GM10248 (cell line): ENCODE measurements at regions of chr17 and their contacts with region 1.

Region 1: DNA sequence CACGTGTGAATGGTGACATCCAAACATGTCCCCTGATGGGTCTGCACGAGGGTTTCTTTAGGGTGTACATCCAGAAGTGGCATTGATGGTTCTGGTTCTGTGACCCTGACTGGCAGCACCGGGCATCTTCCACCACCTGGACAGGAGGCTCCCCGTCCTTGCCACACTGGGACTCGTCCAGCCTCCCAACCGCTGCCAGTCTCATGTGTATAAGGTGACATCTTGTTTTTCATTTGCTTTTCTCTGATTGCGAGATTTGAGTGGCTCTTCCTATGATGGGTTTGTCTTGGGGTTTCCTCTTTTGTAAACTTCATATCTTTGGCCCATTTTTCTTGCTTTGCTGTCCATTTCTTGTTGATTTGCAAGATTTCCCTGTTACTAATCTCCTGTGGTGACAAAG is 9.2 kb upstream of the LIMD2 start:
- DNase-seq: no peak
- CTCF ChIP-seq: no peak

Region 2: DNA sequence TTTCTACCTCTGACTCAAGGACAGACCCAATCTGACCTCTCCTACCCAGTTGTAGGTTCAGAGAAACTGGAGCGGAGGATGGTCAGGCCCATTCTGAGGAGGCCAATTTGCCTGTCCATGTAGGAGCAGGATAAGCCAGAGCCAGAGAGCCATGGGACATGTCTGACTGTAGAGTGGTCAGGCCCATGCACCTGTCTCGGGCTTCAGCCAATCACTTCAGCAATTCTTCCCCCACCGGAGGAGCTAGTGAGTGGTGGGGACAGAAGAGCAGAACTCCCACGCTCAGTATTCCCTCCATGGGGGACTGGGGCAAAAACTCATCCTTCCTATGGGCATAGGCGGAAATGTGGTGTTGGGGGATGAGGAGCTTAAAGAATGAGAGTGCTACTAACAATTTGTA is 144.5 kb before region 1 on chr17:
- CTCF ChIA-PET with region 1: no interaction called
- POLR2A ChIA-PET with region 1: no interaction called
- DNase-seq: no peak
- CTCF ChIP-seq: no peak

Region 3: DNA sequence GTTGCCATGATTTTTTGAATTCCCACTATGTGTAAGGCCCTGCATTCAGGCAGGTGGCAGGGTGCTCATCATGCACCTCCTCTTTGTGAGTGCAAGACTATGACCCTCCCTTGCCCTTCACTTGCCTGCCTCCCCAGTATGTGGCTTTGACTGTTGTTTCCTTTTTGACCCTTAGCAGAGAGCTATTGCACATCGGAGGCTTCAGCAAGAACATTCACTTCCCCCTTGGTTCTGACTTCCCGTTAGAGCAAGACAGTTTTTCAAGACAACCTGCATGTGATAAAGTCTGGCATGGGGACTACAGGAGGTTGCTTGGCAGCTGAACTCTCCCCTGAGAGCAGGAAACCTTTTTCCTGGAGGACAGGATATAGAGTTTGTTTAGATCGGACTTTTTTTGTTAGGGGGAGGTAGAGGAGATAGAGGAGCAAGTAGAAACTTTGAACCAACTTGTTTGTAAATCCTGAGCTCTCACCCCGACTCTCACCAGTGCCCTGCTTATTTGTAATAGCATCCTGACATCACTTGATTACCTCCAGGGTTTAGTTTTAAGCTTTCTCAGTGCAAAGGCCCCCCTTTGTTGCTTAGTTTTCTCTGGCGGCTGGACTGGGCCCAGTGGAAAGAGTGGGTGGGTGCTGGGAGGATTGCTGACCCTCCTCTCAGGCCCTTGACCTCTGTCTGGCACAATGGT is 43.4 kb before region 1 on chr17:
- CTCF ChIA-PET with region 1: no interaction called
- POLR2A ChIA-PET with region 1: no interaction called
- DNase-seq: peak; percentile 50
- CTCF ChIP-seq: no peak

Region 4: DNA sequence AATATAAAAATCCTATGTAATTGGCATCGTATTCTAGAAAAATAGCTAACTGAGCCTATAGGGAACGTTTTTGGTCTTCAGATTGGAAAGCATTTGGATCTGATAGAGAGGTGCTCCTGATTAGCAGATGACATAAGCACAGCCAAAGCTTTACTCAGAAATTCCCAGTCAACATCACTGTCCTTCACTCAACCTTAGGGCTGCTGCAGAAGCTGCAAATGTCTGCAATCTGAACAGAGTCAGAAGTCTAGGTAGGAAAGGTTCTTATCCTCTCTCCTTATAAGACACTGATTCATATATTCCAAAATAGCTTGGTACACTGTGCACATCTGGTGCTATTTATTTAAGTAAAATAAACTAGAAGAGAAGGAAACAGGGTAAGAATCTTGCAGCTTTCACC is 13.3 kb after region 1 on chr17:
- CTCF ChIA-PET with region 1: interaction called, 13 read pairs
- POLR2A ChIA-PET with region 1: interaction called, 4 read pairs
- DNase-seq: no peak
- CTCF ChIP-seq: no peak